HCT116 (cell line): ENCODE measurements at regions of chr2 and their contacts with region 1.

Region 1: DNA sequence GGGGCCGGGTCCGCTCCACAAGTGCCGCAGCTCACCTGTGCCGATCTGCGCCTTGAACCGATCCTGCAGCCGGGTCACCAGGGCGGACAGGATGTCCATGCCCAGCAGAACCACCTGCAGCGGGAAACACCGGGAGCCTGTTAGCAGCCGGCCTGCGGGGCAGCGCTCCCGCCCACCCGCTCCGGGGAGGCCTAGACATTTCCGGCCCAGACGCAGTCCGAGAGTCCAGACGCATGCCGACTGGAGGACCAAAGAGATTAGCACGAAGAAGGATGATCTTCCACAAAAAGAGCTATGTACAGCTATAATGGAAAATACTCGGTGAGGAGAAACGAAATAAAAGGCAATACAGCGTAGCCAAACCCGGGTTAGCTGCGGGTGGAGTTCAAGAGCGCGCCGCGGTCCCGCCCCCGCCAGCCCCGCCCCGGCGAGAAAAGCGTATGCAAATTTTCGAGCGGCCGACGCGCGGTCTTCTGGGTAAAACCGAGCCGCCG is 421 bp upstream of the RNU4ATAC start:
- DNase-seq: peak; percentile 72
- ATAC-seq: peak; percentile 77
- H3K4me3 ChIP-seq: peak overlapping the region; percentile 66 to 70
- H3K27ac ChIP-seq: peak overlapping the region; percentile 77
- H3K4me1 ChIP-seq: peaks cover 15 to 31% of the 10 kb centered on the region in 2 experiments
- H3K27me3 ChIP-seq: no peaks in the 10 kb centered on the region
- CTCF ChIP-seq: no peak
- POLR2A ChIP-seq: no peak
- RAD21 ChIP-seq: no peak

Region 2: GRCh38 chr2:121400201-121400600 is 130.1 kb before region 1 on chr2:
- CTCF ChIA-PET with region 1: no interaction called
- POLR2A ChIA-PET with region 1: interaction called, 3 read pairs
- RAD21 ChIA-PET with region 1: no interaction called
- intact Hi-C with region 1: loop called (anchors 1 kb)
- DNase-seq: no peak
- ATAC-seq: no peak
- H3K4me3 ChIP-seq: no peak overlapping the region
- H3K27ac ChIP-seq: no peak overlapping the region
- H3K4me1 ChIP-seq: no peaks in the 10 kb centered on the region
- H3K27me3 ChIP-seq: no peaks in the 10 kb centered on the region
- CTCF ChIP-seq: no peak
- POLR2A ChIP-seq: no peak
- RAD21 ChIP-seq: no peak

Region 3: DNA sequence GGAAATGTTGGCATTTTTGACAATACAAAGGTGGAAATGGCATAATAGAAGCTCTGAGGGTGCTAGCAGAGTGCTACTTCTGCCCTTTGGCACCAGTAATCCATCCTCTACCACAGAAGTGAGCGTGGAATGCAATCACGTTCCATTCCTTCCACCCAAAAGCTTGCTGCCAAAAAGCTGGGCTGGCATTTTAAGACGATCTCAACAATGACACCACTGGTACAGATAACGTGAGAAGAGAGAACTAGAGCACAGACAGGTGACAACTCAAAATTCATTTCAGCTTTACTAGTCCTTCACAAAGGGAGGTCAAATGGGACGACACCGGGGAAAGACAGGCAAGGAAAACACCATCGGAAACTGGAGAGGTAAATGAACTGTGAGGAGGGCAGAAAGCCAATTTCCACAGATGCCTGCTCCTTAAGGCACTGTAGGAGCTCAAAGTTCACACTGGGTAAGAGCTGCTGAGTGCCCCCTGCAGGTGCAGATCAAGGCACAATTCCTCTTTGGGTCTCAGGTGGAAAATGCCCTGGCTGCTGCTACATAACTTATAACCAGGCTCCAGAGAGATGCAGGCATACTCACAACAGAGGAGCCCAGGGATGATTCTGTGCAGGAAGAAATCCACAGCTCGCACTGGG is 50.3 kb before region 1 on chr2:
- CTCF ChIA-PET with region 1: no interaction called
- POLR2A ChIA-PET with region 1: no interaction called
- RAD21 ChIA-PET with region 1: no interaction called
- intact Hi-C with region 1: no loop called
- DNase-seq: no peak
- ATAC-seq: peak; percentile 74
- H3K4me3 ChIP-seq: no peak overlapping the region
- H3K27ac ChIP-seq: no peak overlapping the region
- H3K4me1 ChIP-seq: peaks cover 4% of the 10 kb centered on the region in 2 experiments; a peak in 3 of 4 replicates
- H3K27me3 ChIP-seq: no peaks in the 10 kb centered on the region
- CTCF ChIP-seq: peak in 2 of 3 experiments; percentile 39 to 45; a peak in 4 of 6 replicates
- POLR2A ChIP-seq: no peak
- RAD21 ChIP-seq: no peak

Region 4: GRCh38 chr2:121649596-121650314 is 119.5 kb after region 1 on chr2:
- CTCF ChIA-PET with region 1: interaction called, 3 read pairs
- POLR2A ChIA-PET with region 1: interaction called, 22 read pairs
- RAD21 ChIA-PET with region 1: no interaction called
- intact Hi-C with region 1: loop called (anchors 1 kb)
- DNase-seq: peak; percentile 93
- ATAC-seq: peak; percentile 96
- H3K4me3 ChIP-seq: peak overlapping the region; percentile 78 to 86
- H3K27ac ChIP-seq: peak overlapping the region; percentile 87
- H3K4me1 ChIP-seq: peaks cover 6 to 19% of the 10 kb centered on the region in 2 experiments; a peak in 3 of 4 replicates
- H3K27me3 ChIP-seq: no peaks in the 10 kb centered on the region
- CTCF ChIP-seq: no peak
- POLR2A ChIP-seq: peak; percentile 90
- RAD21 ChIP-seq: no peak; the same call in 1 of the 2 replicates

Region 5: GRCh38 chr2:121722479-121722878 is 192.2 kb after region 1 on chr2:
- CTCF ChIA-PET with region 1: interaction called, 9 read pairs
- POLR2A ChIA-PET with region 1: interaction called, 9 read pairs
- RAD21 ChIA-PET with region 1: interaction called in 1 of 2 experiments, 3 read pairs
- intact Hi-C with region 1: loop called (anchors 1 kb)
- DNase-seq: no peak
- ATAC-seq: no peak
- H3K4me3 ChIP-seq: no peak overlapping the region
- H3K27ac ChIP-seq: no peak overlapping the region
- H3K4me1 ChIP-seq: peaks cover 0 to 15% of the 10 kb centered on the region in 2 experiments; a peak in 1 of 4 replicates
- H3K27me3 ChIP-seq: no peaks in the 10 kb centered on the region
- CTCF ChIP-seq: no peak
- POLR2A ChIP-seq: no peak
- RAD21 ChIP-seq: no peak

Region 6: DNA sequence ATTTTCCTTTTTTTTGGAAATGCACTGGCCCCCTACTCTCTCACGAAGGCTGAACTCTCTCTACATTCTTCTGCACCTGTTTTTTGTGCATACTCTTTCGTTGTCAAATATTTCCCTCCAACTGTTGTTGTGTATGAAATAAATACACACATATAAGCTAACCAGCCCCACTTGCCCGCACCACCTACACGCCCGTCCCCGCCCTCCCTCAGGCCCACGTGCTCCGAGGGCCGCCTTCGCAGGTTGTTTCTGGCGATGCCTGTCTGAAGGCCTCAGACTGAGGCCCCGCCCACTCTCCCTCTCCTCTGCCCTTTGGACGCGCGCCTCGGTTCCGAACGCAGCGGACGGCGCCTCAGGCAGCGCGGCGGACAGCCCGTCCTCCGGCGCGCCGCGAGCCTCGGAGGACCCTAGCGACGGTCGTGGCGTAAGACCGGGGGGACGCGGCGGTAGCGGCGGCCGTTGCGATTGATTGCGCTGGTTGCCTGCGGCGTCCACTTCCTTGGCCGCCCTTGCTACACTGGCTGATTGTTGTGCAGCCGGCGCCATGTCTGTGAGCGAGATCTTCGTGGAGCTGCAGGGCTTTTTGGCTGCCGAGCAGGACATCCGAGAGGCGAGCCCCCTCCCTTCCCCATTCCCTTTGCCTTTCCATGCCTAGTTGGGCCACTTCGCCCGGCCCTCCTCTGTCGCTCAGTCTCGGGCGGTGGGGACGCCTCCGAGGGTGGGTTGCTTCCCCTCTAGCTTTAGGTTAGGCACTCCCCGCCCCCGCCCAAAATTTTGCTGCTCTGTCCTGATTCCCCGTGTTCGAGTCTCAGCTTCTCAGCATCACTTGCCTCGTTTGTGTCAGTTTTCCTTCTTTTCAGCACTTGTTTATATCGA is 225.2 kb after region 1 on chr2 and contains the start of gene TSN:
- CTCF ChIA-PET with region 1: interaction called, 4 read pairs
- POLR2A ChIA-PET with region 1: no interaction called
- RAD21 ChIA-PET with region 1: no interaction called
- intact Hi-C with region 1: loop called (anchors 2 kb)
- DNase-seq: peak; percentile 94
- ATAC-seq: peak; percentile 99
- H3K4me3 ChIP-seq: peak within 1 kb of the TSS; percentile 99 to 100
- H3K27ac ChIP-seq: peak within 1 kb of the TSS; percentile 68
- H3K4me1 ChIP-seq: peaks cover 11 to 17% of the 10 kb centered on the region in 2 experiments; a peak in 3 of 4 replicates
- H3K27me3 ChIP-seq: no peaks in the 10 kb centered on the region
- CTCF ChIP-seq: no peak
- POLR2A ChIP-seq: no peak
- RAD21 ChIP-seq: no peak
- total RNA-seq, gene TSN: 91.5 TPM